Breast epithelium (tissue), 4 donors: ENCODE measurements at regions of chr7 and their contacts with region 1.

Region 1: DNA sequence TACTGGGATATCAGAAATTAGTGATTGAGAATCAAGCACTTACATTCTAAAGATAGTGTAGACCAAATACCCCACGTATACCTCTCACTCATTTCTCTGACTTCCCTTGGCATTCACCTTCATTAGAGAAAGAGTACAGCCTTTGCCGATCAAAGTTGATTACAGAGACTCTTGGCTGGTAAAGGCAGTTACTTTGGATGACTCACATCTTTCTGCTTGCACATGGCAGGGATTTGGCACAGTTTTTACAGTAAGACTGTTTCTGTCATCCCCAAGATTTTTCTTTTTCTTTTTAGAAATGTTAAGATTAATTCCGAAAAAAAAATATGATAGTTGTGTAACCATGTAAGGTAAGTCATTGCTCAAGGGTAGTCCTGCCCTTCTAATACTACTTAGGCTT is 143.0 kb downstream of the TSPAN12 start:
- DNase-seq: no peak
- H3K4me3 ChIP-seq: no peak overlapping the region
- H3K27ac ChIP-seq: no peak overlapping the region
- H3K4me1 ChIP-seq: no peaks in the 10 kb centered on the region
- H3K27me3 ChIP-seq: no peaks in the 10 kb centered on the region
- CTCF ChIP-seq: no peak
- POLR2A ChIP-seq: no peak

Region 2: DNA sequence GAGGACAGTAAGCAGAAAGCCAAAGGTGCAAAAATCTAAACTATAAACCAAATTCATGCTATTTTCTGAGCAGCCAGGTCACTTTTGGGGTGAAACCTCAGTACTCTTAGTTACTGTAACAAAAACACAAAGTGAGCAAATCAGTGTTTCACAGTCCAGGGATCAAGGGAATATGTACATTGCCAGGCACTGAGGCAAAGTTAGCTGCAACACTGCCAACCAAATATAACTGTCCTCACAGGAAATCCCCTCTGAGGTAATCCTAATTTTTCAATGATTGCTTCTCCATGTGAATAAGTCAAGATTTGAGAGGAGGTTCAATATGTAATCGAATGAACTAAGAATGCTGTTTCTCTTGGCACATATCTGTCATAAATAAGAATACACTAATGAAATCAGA is 86.7 kb before region 1 on chr7:
- intact Hi-C with region 1: no loop called
- DNase-seq: no peak
- H3K4me3 ChIP-seq: no peak overlapping the region
- H3K27ac ChIP-seq: no peak overlapping the region
- H3K4me1 ChIP-seq: no peaks in the 10 kb centered on the region
- H3K27me3 ChIP-seq: no peaks in the 10 kb centered on the region
- CTCF ChIP-seq: no peak
- POLR2A ChIP-seq: no peak

Region 3: GRCh38 chr7:120645966-120646365 is 69.0 kb before region 1 on chr7:
- intact Hi-C with region 1: no loop called
- DNase-seq: no peak
- H3K4me3 ChIP-seq: no peak overlapping the region
- H3K27ac ChIP-seq: no peak overlapping the region
- H3K4me1 ChIP-seq: no peaks in the 10 kb centered on the region
- H3K27me3 ChIP-seq: no peaks in the 10 kb centered on the region
- CTCF ChIP-seq: no peak
- POLR2A ChIP-seq: no peak

Region 4: DNA sequence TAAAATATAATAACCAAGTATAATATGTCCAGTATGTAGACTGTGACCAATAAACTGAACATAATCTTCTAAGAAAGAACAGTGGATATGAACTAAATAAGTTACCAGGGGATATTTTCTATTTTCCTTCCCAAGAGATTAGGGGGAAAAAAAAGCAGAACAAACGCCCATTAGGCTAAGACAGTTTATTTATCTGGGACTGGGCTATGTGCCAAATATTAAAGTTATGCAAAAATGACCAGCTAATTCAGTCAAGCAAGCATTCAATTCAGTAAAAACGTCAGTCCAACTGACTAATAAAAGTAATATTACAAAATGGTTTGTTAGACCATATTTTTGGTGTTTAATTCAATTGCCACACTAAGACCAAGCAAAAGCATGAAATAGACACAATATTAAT is 20.8 kb after region 1 on chr7:
- intact Hi-C with region 1: loop called (anchors 2 kb)
- DNase-seq: no peak
- H3K4me3 ChIP-seq: no peak overlapping the region
- H3K27ac ChIP-seq: no peak overlapping the region
- H3K4me1 ChIP-seq: no peaks in the 10 kb centered on the region
- H3K27me3 ChIP-seq: no peaks in the 10 kb centered on the region
- CTCF ChIP-seq: no peak
- POLR2A ChIP-seq: no peak